Mammary epithelial cell (primary cell): ENCODE measurements at regions of chr19 and their contacts with region 1.

Region 1: DNA sequence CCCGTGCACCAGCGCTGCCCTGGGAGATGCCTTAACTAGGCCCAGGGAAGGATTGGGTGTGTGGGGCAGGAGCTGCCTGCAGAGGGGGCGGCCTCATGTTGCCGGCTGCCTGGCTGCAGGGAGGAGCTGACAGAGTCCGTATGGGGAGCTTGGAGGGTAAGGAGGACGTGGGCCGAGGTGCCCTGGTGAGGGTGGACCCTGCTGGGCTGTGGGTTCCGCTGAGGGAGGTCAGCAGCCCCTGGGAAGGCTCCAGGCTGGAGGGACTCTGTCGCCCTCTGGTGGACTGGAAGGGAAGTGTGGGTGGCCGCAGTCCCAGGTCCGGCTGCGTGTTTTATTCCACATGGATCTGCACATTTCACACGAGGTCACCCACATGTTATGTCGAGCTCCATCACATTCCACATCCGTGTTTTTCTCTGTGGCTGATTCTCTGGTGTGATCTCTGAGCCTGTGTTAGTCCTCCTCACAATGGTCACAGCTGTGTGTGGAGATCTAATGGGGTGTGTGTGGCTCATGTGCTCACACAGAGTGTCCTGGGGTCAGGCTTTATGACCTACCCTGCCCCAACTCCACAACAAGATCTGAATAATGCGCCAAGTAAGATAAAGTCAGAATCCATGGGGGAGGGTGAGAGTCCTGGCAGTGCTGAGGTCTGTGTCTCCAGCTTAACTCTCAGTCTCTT is 1.8 kb upstream of the CEACAM8 start:
- DNase-seq: no peak
- H3K4me3 ChIP-seq: no peak overlapping the region
- H3K27ac ChIP-seq: no peak overlapping the region
- H3K4me1 ChIP-seq: no peaks in the 10 kb centered on the region
- H3K27me3 ChIP-seq: no peaks in the 10 kb centered on the region
- CTCF ChIP-seq: peak; percentile 91 to 95

Region 2: DNA sequence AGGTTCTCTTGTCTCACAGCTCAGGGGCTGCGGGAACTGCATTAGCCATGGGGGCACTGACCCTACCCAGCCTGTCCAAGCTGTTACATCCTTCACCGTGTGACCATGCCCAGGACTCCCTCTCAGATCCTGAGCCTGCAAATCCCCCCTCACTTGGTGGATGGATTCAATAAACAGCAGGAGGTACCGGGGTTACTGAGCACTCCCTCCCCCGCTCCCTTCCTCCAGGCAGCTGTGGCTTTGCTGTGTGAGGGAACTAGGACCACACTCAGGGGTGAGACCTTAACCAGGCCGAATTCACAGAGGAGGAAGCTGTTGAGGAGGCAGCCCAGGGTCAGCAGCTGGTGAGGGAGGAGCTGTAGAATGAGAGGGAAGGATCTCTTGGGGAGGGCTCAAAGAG is 41.2 kb before region 1 on chr19:
- CTCF ChIA-PET with region 1: no interaction called
- dilution Hi-C with region 1: loop called (anchors 5 kb)
- in situ Hi-C with region 1: no loop called
- intact Hi-C with region 1: no loop called
- DNase-seq: no peak
- H3K4me3 ChIP-seq: no peak overlapping the region
- H3K27ac ChIP-seq: no peak overlapping the region
- H3K4me1 ChIP-seq: peaks cover 7% of the 10 kb centered on the region
- H3K27me3 ChIP-seq: no peaks in the 10 kb centered on the region
- CTCF ChIP-seq: no peak

Region 3: DNA sequence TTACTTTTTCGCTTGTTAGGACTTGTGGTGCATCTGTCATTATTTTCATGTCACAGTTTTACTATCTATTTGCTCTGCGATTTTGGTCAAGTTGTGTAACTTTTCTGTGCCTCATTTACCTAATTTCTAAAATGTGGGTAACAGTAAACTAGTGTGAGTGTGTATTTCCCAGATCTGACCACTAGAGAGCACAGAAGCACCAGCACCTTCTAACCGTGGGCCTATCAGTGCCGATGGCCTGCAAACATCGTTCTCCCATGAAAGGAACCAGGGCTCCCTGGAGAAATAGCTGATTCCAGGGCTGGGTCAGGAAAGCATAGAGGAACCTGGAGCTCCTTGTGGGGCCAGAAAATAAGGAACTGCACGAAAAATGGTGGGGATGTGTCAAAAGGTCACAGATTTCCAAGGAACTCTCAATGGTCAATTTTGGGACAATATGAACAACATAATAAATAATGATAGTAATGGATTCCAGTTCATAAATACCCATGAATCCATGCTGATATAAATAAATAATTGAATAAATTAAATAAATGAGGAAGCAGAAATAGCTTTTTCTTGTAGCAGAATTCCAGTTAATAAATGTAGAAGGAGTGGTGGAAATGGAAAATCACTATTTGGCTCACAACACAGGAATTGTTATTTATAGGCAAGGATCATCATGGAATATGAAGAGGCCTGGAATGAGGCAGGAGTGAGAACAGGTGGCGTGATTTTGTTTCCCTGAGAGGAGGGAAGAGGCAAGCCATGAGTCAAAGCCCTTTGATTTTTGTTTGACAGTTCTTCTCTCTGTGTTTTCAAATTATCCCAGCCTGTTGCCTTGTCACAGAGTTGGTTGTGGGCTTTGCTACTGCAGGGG is 33.0 kb before region 1 on chr19:
- CTCF ChIA-PET with region 1: no interaction called
- dilution Hi-C with region 1: loop called (anchors 5 kb)
- in situ Hi-C with region 1: no loop called
- intact Hi-C with region 1: loop called (anchors 1 kb)
- DNase-seq: peak; percentile 22
- H3K4me3 ChIP-seq: no peak overlapping the region
- H3K27ac ChIP-seq: no peak overlapping the region
- H3K4me1 ChIP-seq: peaks cover 7% of the 10 kb centered on the region
- H3K27me3 ChIP-seq: no peaks in the 10 kb centered on the region
- CTCF ChIP-seq: peak; percentile 60 to 74

Region 4: DNA sequence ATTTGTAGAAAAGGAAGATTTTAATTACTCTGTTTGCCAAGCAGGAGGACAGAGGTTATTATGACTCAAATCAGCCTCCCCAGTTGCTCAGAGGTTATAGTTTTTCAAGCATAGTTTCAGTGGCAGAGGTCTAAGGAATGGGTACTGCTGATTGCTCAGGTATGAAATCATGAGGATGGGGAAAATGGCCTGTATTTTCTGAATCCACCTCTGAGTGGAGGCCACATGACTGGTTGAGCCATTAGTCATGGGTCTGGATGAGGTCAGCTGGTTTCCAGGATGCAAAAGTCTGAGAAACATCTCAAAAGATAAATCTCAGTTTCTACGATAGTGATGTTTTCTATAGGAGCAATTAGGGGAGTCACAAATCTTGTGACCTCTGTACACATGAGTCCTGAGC is 61.0 kb after region 1 on chr19:
- CTCF ChIA-PET with region 1: no interaction called
- dilution Hi-C with region 1: no loop called
- in situ Hi-C with region 1: no loop called
- intact Hi-C with region 1: no loop called
- DNase-seq: peak; percentile 25
- H3K4me3 ChIP-seq: no peak overlapping the region
- H3K27ac ChIP-seq: no peak overlapping the region
- H3K4me1 ChIP-seq: no peaks in the 10 kb centered on the region
- H3K27me3 ChIP-seq: peaks cover 3% of the 10 kb centered on the region
- CTCF ChIP-seq: no peak